ENCODE measurements at regions of chr1 and their contacts with region 1.

Region 1: GRCh38 chr1:12196641-12197482 is 30.1 kb downstream of the TNFRSF1B start:
- DNase-seq: peak; percentile 69
- H3K4me3 ChIP-seq: no peak overlapping the region
- H3K27ac ChIP-seq: no peak overlapping the region
- H3K4me1 ChIP-seq: no peaks in the 10 kb centered on the region
- H3K27me3 ChIP-seq: peaks cover 6% of the 10 kb centered on the region
- CTCF ChIP-seq: peak; percentile 65

Region 2: DNA sequence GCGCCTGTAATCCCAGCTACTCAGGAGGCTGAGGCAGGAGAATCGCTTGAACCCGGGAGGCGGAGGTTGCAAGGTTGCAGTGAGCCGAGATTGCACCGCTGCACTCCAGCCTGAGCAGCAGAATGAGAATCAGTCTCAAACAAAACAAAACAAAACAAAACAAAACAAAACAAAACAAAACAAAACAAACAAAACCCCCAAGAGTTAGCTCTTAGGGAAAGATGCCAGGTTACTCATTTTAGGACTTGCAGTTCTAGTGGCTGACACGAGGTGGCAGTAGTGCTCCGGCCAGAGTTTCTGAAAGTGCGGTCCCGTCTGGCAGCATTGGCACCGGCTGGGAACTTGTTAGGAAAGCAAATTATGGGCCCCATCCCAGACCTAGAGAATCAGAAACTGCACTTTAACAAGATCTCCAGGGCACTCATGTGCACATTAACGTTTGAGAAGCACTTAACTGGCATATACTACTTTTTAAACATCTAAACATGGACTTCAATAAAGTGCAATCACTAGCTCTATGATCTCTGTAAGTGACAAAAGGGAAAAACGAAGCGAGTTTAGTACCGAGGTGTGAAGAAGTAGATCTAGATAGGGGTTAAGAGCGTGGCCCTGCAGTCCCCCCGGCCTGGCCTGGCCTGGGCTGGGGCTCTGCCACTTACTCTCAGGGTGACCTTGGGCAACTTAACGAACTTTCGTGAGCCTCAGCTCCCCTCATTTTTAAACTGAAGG is 72.0 kb before region 1 on chr1:
- CTCF ChIA-PET with region 1: interaction called, 16 read pairs
- POLR2A ChIA-PET with region 1: no interaction called
- intact Hi-C with region 1: no loop called
- DNase-seq: peak; percentile 72
- H3K4me3 ChIP-seq: no peak overlapping the region
- H3K27ac ChIP-seq: no peak overlapping the region
- H3K4me1 ChIP-seq: no peaks in the 10 kb centered on the region
- H3K27me3 ChIP-seq: no peaks in the 10 kb centered on the region
- CTCF ChIP-seq: peak; percentile 87

Region 3: DNA sequence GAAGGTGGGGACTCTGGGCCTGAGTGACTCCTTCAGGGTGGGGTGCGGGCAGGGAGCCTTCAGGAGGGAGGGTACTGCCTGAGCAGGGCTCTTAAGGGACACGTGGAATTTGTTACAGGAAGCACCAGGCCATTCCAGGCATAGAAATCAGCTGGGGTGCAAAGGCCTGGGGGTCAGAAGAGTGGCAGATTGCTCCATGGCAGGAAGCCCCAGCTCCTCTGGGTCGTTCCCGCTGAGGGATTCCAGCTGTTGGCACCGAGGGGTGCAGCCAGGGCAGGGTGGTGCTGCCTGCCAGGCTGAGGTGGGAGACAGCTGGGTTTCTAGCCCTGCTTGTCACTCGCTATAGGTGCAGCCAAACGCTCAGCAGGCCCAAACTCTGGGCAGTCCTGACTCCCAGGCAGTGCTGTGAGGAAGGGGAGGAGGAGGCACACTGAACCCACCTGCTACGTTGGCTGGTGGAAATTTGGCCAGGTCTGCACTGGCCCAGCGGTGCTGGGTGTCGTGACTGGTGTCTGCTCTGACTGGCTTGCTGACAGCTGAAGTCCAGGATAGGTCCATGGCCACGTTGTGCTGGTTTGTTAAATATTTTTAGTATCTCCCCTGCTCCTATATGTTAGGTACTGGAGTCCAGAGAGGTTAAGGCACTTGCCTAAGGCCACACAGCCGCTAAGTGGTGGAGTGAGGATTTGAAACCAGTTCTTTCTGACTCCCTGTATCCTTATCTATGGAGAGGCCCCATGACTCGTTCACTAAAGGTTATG is 10.8 kb before region 1 on chr1:
- CTCF ChIA-PET with region 1: interaction called, 12 read pairs
- POLR2A ChIA-PET with region 1: no interaction called
- intact Hi-C with region 1: no loop called
- DNase-seq: no peak
- H3K4me3 ChIP-seq: no peak overlapping the region
- H3K27ac ChIP-seq: no peak overlapping the region
- H3K4me1 ChIP-seq: no peaks in the 10 kb centered on the region
- H3K27me3 ChIP-seq: peaks cover 19% of the 10 kb centered on the region
- CTCF ChIP-seq: no peak

Measured in A673 (cell line).